HAP-1 (cell line): ENCODE measurements at regions of chr20 and their contacts with region 1.

Region 1: DNA sequence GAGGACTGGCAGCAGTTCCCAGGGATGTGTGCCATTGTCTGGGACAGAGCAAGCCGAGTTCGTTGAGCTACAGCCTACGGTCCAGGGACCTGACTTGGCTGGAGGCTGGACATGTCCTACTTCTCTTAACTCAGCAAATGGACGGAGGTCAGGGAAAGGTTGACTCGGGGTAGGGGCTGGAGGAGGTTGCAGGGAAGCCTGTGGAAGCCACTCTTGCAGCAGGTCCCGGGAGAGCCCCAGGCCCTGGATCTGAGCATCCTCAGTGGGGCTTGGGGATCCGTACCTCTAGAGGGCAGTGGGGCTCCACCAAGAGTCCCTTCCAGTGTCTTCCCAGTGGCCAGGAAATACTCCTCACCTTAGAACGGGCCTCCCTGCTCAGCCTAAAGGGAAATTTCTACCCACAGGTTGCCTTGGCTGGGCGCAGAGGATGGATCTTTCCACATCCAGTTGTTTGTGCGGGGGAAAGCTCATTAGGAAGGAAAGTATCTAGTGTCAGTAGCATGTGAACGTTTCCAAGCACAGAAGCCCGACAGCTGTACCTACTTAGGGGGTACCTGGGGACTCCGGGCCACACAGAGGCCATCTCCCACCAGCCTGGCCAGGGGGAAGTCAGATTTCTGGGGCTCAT is 170.2 kb downstream of the NFATC2 start:
- DNase-seq: peak; percentile 54 to 77
- H3K4me3 ChIP-seq: no peak overlapping the region
- H3K4me1 ChIP-seq: no peaks in the 10 kb centered on the region
- H3K27me3 ChIP-seq: no peaks in the 10 kb centered on the region

Region 2: GRCh38 chr20:51595058-51595532 is 222.8 kb after region 1 on chr20:
- in situ Hi-C with region 1: loop called (anchors 10 kb)
- DNase-seq: peak; percentile 80 to 92
- H3K4me3 ChIP-seq: no peak overlapping the region
- H3K4me1 ChIP-seq: peaks cover 19% of the 10 kb centered on the region
- H3K27me3 ChIP-seq: no peaks in the 10 kb centered on the region

Region 3: GRCh38 chr20:51624157-51624731 is 252.0 kb after region 1 on chr20:
- in situ Hi-C with region 1: loop called (anchors 10 kb)
- DNase-seq: peak; percentile 63 to 87
- H3K4me3 ChIP-seq: no peak overlapping the region
- H3K4me1 ChIP-seq: no peaks in the 10 kb centered on the region
- H3K27me3 ChIP-seq: no peaks in the 10 kb centered on the region

Region 4: GRCh38 chr20:52083627-52084232 is 711.4 kb after region 1 on chr20:
- in situ Hi-C with region 1: loop called (anchors 25 kb)
- DNase-seq: peak; percentile 76 to 84
- H3K4me3 ChIP-seq: no peak overlapping the region
- H3K4me1 ChIP-seq: peaks cover 3% of the 10 kb centered on the region; the same call in 1 of the 2 replicates
- H3K27me3 ChIP-seq: no peaks in the 10 kb centered on the region